ENCODE measurements at regions of chr4 and their contacts with region 1.

Region 1: DNA sequence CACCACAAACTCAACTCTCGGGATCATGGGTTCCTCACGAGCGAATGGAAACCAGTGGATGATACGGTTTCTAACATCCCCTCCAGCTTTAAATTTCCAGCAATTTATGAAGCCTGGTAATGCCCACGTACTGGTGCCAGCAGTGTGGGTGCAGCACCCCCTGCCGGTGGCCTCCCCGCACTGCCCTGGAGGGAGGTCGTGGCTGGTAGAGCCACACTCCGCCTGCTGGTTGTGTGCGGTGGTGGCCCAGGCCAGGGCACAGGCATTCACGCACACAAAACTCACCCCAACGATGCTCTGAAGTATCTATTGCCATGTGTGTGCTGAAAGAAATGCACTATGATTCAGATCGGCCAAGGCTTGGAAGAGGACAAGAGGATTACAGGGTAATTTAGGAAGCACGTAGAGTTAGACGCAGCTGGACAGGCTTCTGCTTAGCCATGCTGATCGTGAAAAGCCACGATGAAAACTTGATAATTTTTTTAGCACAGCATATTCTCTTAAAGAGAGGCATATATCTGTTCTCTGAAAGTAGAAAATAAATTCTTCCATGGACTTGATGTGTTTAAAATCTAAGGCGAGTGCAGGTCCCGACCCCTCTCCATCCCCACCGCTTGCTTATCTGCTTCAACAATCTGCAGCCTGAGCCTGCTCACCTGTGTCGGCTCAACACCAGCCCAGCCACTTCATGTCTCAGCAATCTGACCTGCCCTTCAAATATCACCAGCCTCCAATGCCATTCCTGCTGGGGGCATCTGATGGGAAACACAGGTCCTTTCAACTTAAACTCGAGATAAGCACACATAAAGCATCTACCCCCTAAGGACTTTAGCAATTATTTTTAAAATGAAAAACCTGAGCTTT is 59.0 kb downstream of the SCD5 start:
- DNase-seq: no peak
- H3K4me3 ChIP-seq: no peak overlapping the region
- H3K27ac ChIP-seq: no peak overlapping the region
- H3K27me3 ChIP-seq: no peaks in the 10 kb centered on the region
- CTCF ChIP-seq: peak; percentile 90

Region 2: GRCh38 chr4:82462415-82462831 is 277.1 kb before region 1 on chr4:
- CTCF ChIA-PET with region 1: interaction called, 196 read pairs
- POLR2A ChIA-PET with region 1: interaction called, 3 read pairs
- DNase-seq: peak; percentile 79
- H3K4me3 ChIP-seq: no peak overlapping the region
- H3K27ac ChIP-seq: no peak overlapping the region
- H3K27me3 ChIP-seq: no peaks in the 10 kb centered on the region
- CTCF ChIP-seq: peak; percentile 77

Region 3: DNA sequence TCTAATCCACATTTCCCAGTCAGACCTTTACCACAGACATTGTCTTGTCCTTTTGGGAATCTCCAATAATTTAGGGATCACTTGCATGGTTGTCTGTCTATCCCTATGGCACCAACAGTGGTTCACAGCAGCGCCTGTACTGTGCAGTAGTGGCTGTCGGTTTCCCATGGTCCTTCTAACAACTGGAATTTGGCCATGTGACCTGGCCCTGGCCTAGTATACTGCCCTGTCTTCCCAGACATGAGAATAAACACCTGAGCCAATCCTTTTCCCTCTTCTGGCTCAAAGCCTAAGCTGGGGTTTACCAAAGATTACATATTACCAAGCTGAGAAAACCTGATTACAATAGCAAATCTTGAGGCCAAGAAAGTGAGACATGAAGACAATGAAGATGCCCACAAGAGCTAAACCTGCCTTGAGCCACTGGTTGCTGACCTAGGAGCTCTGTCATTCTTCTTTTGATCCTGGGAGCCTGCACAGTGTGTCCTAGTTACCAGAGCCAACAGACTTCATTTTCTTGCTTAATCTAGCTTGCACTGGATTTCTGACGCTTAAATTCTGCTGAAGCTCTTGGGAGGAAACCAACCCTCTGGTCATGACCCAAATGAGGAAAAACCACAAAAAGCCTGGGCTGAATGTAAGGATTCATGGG is 33.1 kb before region 1 on chr4:
- CTCF ChIA-PET with region 1: interaction called, 10 read pairs
- POLR2A ChIA-PET with region 1: interaction called, 3 read pairs
- DNase-seq: no peak
- H3K4me3 ChIP-seq: no peak overlapping the region
- H3K27ac ChIP-seq: no peak overlapping the region
- H3K27me3 ChIP-seq: no peaks in the 10 kb centered on the region
- CTCF ChIP-seq: no peak

Region 4: DNA sequence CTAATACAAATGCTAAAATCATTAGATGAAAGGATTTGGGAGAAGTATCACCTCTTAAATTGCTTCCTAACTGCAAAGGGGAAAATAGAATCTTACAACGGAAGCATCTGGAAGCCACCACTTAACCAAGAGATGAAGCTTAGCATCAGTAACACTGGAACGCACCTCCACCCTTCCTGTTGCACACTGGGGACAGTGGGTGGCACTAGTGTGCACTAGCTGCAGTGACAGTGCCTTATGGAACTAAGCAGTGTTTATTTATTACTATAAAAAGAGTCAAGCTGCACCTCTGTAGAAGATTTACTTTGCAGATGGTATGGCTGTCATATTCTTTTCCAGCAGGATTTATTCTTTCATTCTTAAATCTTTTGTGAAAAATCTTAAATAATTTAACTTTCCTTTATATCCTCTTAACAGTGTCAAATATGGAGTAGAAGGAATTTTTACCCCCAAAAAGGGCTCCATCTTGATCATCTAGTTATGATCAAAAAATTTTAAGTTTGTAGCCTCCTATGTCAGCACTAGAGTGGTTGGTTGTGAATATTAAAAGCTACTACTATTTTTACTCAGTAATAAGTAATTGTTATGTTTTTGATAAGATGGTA is 17.6 kb before region 1 on chr4:
- CTCF ChIA-PET with region 1: interaction called, 13 read pairs
- POLR2A ChIA-PET with region 1: interaction called, 4 read pairs
- DNase-seq: no peak
- H3K4me3 ChIP-seq: no peak overlapping the region
- H3K27ac ChIP-seq: no peak overlapping the region
- H3K27me3 ChIP-seq: no peaks in the 10 kb centered on the region
- CTCF ChIP-seq: no peak

Region 5: DNA sequence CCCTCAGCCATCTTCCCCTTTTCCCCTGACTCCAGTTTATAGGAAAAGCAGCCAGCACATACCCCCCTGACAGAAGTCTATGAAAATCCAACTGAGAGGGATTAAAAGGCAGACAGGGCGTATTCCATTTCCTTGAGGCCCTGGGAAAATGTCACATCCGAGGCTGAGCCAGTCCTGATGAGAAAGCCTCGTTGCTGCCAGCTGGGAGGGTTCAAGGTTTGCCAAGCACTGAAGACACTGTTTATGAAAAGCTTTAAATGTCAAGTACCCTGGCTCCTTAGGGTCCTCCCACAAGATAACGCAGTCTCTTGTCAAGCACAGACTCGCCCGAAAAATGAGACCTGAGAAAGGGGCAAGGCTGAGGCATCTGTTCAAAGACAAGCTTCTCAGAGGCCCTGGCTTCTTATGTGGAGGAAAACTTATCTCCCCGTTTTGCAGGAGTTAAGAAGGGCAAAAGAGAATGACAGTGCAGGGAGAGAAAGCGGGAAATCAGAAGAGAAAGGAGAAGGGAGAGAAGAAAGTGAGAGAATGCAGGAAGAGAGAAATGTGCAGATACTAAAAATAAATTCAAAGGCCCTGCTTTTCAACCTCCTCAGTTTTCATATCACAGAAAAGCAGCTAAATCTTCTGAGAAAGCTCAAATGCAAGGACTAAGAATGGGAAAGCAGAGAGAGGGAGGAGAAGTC is 14.3 kb after region 1 on chr4:
- CTCF ChIA-PET with region 1: interaction called, 36 read pairs
- POLR2A ChIA-PET with region 1: no interaction called
- DNase-seq: no peak
- H3K4me3 ChIP-seq: no peak overlapping the region
- H3K27ac ChIP-seq: no peak overlapping the region
- H3K27me3 ChIP-seq: peaks cover 16% of the 10 kb centered on the region
- CTCF ChIP-seq: no peak

Region 6: GRCh38 chr4:82776925-82777542 is 37.5 kb after region 1 on chr4:
- CTCF ChIA-PET with region 1: interaction called, 14 read pairs
- POLR2A ChIA-PET with region 1: no interaction called
- DNase-seq: peak; percentile 15
- H3K4me3 ChIP-seq: no peak overlapping the region
- H3K27ac ChIP-seq: no peak overlapping the region
- H3K27me3 ChIP-seq: peaks cover 5% of the 10 kb centered on the region
- CTCF ChIP-seq: no peak

Region 7: GRCh38 chr4:82785611-82786400 is 46.3 kb after region 1 on chr4:
- CTCF ChIA-PET with region 1: interaction called, 12 read pairs
- POLR2A ChIA-PET with region 1: interaction called, 3 read pairs
- DNase-seq: peak; percentile 13
- H3K4me3 ChIP-seq: no peak overlapping the region; the same call in 1 of the 2 replicates
- H3K27ac ChIP-seq: no peak overlapping the region
- H3K27me3 ChIP-seq: peaks cover 2% of the 10 kb centered on the region
- CTCF ChIP-seq: no peak

Region 8: GRCh38 chr4:83034630-83035494 is 295.3 kb after region 1 on chr4 and contains the start of gene COPS4:
- CTCF ChIA-PET with region 1: no interaction called
- POLR2A ChIA-PET with region 1: no interaction called
- DNase-seq: peak; percentile 99
- H3K4me3 ChIP-seq: peak within 1 kb of the TSS; percentile 90
- H3K27ac ChIP-seq: peak within 1 kb of the TSS; percentile 92
- H3K27me3 ChIP-seq: peaks cover 6% of the 10 kb centered on the region
- CTCF ChIP-seq: peak; percentile 59
- polyA plus RNA-seq, gene COPS4: 59.0 and 78.4 TPM in 2 replicates